ENCODE measurements at regions of chr11 and their contacts with region 1.

Region 1: GRCh38 chr11:64298966-64299846 is 952 bp upstream of the CATSPERZ start:
- DNase-seq: peak; percentile 79
- H3K4me3 ChIP-seq: peak overlapping the region; percentile 32
- H3K27ac ChIP-seq: peak overlapping the region; percentile 53 to 81
- H3K4me1 ChIP-seq: peaks cover 32% of the 10 kb centered on the region
- H3K27me3 ChIP-seq: no peaks in the 10 kb centered on the region
- CTCF ChIP-seq: no peak
- POLR2A ChIP-seq: no peak

Region 2: DNA sequence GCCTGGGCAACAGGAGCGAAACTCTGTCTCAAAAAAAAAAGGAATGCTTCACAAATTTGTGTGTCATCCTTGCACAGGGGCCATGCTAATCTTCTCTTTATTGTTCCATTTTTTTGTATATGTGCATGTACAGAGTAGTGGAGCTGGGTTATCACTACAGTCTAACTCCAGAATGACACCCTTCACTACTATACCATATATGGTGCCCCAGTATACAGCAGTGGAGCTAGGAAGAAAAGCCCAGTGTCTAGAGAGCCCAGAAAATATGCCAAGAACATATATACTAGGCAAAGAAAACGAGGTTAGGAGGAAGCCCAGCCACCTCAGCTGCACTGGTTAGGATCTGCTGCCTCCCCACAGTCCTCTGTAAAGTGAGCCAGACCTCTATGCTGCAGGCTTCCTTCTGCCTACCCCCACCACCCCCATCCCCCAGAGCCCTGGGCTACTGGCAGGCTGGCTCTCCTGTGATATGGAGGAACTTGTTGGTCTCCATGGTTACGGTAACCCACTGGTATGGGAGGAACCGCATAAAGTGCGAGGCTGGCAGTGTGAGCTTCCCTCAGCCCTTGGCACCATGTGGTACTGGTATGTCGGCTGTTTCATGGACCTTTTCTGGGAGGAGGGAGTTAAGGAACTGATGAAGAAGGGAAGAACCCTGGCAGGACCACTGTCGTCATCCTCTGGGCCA is 416.5 kb before region 1 on chr11:
- intact Hi-C with region 1: no loop called
- DNase-seq: peak; percentile 26
- H3K4me3 ChIP-seq: no peak overlapping the region
- H3K27ac ChIP-seq: no peak overlapping the region
- H3K4me1 ChIP-seq: peaks cover 19% of the 10 kb centered on the region
- H3K27me3 ChIP-seq: no peaks in the 10 kb centered on the region
- CTCF ChIP-seq: no peak
- POLR2A ChIP-seq: no peak

Region 3: DNA sequence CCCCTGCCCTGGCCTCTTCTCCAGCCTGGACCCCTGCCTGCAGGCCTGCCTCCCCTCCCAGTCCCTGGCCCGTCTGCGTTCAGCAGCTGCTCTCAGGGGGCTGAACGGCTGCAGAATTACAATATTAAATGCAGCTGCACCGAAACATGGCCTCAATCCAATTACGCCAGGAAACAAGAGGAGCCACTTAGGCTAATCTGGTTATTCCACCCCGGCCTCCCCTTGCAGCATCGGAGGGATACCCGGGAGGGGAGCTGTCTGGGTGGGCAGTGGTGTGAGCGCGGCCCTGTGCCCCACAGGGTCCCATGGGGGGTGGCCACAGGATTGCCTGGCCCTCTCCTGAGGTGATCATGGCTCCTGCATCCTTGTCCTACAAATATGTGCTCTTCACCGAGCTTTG is 220.9 kb before region 1 on chr11:
- intact Hi-C with region 1: no loop called
- DNase-seq: no peak
- H3K4me3 ChIP-seq: no peak overlapping the region
- H3K27ac ChIP-seq: no peak overlapping the region
- H3K4me1 ChIP-seq: peaks cover 7% of the 10 kb centered on the region
- H3K27me3 ChIP-seq: no peaks in the 10 kb centered on the region
- CTCF ChIP-seq: no peak
- POLR2A ChIP-seq: no peak

Region 4: DNA sequence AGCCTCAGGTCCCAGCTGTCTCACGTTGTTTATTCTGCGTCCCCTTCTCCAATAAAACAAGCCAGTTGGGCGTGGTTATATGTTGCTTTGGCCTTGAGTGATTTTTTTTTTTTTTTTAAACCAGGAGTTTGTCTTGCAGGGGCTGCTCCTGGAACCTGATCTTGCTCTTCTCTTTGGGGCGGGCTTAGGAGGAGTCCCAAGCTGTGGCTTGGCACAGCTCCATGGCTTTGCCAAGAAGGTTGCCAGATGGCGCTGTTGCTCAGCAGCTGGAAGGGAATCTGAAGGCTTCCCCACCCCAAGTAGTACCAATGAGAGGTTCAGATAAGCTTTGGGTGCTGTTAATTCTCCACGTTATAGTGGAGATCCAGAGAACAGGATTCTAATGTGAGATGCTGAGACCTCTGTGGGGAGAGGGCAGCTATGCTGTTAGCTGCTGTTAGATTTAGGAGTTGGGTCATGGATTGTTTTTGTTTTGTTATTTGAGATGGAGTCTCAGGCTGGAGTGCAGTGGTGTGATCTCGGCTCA is 94.7 kb before region 1 on chr11:
- intact Hi-C with region 1: loop called (anchors 10 kb)
- DNase-seq: peak; percentile 94
- H3K4me3 ChIP-seq: no peak overlapping the region
- H3K27ac ChIP-seq: peak overlapping the region in 1 of 2 donors; percentile 3
- H3K4me1 ChIP-seq: peaks cover 9% of the 10 kb centered on the region
- H3K27me3 ChIP-seq: no peaks in the 10 kb centered on the region
- CTCF ChIP-seq: peak; percentile 47 to 64 (median 61)
- POLR2A ChIP-seq: no peak

Measured in testis (tissue), 5 donors.